Astrocyte of the spinal cord (primary cell): ENCODE measurements at regions of chr11 and their contacts with region 1.

Region 1: GRCh38 chr11:128831174-128832120 is 35.6 kb downstream of the KCNJ1 start:
- DNase-seq: peak; percentile 85
- H3K4me3 ChIP-seq: no peak overlapping the region
- CTCF ChIP-seq: peak; percentile 79

Region 2: DNA sequence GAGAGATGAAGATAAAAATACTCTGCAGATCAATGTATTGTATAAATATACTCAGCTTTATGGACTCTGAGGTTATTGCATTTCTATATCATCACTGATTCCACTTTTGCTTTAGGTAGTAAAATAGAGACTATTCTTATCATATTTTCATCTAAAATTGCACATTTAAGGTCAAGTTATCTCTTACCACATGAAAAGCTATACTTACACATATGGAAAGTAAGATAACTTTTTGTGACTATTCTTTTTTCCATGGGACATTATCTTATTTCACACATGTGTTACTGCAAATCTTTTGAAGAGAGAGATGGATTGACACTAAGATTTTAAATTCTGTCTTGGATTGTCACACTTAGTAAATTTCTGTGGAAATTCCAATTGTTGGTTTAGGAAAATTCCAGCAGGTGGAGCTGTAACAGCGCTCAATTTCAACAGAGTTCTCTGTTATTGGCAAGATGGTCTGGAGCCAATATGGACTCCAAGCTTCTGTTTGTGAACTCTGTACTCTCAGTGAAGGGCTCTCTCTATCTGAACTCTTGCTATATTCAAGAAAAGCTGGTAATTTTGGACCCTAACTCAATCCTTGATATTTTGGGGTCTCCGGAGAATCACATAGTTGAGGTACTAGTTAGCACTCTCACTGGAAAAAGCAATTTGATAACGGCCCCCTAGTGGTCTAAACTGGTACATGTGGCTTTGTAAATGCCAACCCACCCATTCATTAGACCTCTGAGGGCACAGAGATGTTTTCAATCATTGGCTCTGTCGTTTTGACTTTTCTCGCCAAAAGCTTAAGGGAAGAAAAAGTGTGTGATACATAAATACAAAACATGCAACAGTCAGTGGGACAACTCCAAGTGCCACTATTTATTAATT is 673.8 kb before region 1 on chr11:
- in situ Hi-C with region 1: loop called (anchors 25 kb)
- DNase-seq: peak; percentile 88
- H3K4me3 ChIP-seq: peak overlapping the region; percentile 3
- CTCF ChIP-seq: peak; percentile 74

Region 3: GRCh38 chr11:129006161-129006560 is 174.7 kb after region 1 on chr11:
- in situ Hi-C with region 1: no loop called
- DNase-seq: no peak
- H3K4me3 ChIP-seq: no peak overlapping the region
- CTCF ChIP-seq: no peak